K562 (cell line): ENCODE measurements at regions of chr6 and their contacts with region 1.

Region 1: GRCh38 chr6:112180095-112180820 is 74.1 kb downstream of the LAMA4 start:
- DNase-seq: peak; percentile 39 to 85 (median 45)
- ATAC-seq: peak; percentile 91
- H3K4me3 ChIP-seq: no peak overlapping the region
- H3K27ac ChIP-seq: no peak overlapping the region
- H3K4me1 ChIP-seq: no peaks in the 10 kb centered on the region
- H3K27me3 ChIP-seq: peaks cover under 1 to 6% of the 10 kb centered on the region in 2 experiments; a peak in 3 of 5 replicates
- CTCF ChIP-seq: peak; percentile 44 to 79 (median 51); a peak in 4 of 6 replicates
- EP300 ChIP-seq: no peak
- POLR2A ChIP-seq: no peak
- RAD21 ChIP-seq: peak; percentile 88 to 90

Region 2: GRCh38 chr6:112311950-112312547 is 131.8 kb after region 1 on chr6:
- CTCF ChIA-PET with region 1: interaction called, 23 read pairs
- POLR2A ChIA-PET with region 1: interaction called, 4 read pairs
- in situ Hi-C with region 1: no loop called
- intact Hi-C with region 1: loop called (anchors 1 kb)
- DNase-seq: peak; percentile 18 to 40 (median 35)
- ATAC-seq: no peak
- H3K4me3 ChIP-seq: no peak overlapping the region
- H3K27ac ChIP-seq: no peak overlapping the region
- H3K4me1 ChIP-seq: no peaks in the 10 kb centered on the region
- H3K27me3 ChIP-seq: peaks cover 0 to 2% of the 10 kb centered on the region in 2 experiments; a peak in 1 of 5 replicates
- CTCF ChIP-seq: peak; percentile 40 to 66 (median 52); a peak in 5 of 6 replicates
- EP300 ChIP-seq: no peak
- POLR2A ChIP-seq: no peak
- RAD21 ChIP-seq: peak; percentile 59 to 67

Region 3: GRCh38 chr6:112372226-112372806 is 192.1 kb after region 1 on chr6:
- CTCF ChIA-PET with region 1: no interaction called
- POLR2A ChIA-PET with region 1: no interaction called
- in situ Hi-C with region 1: no loop called
- intact Hi-C with region 1: loop called (anchors 5 kb)
- DNase-seq: peak in 1 of 4 experiments; percentile 5
- ATAC-seq: peak; percentile 65
- H3K4me3 ChIP-seq: no peak overlapping the region
- H3K27ac ChIP-seq: no peak overlapping the region
- H3K4me1 ChIP-seq: peaks cover 0 to under 1% of the 10 kb centered on the region in 2 experiments; a peak in 1 of 5 replicates
- H3K27me3 ChIP-seq: peaks cover 0 to 1% of the 10 kb centered on the region in 2 experiments; a peak in 2 of 5 replicates
- CTCF ChIP-seq: peak in 2 of 3 experiments; percentile 47 to 50; a peak in 4 of 6 replicates
- EP300 ChIP-seq: no peak
- POLR2A ChIP-seq: no peak
- RAD21 ChIP-seq: peak; percentile 35 to 55; a peak in 3 of 4 replicates

Region 4: DNA sequence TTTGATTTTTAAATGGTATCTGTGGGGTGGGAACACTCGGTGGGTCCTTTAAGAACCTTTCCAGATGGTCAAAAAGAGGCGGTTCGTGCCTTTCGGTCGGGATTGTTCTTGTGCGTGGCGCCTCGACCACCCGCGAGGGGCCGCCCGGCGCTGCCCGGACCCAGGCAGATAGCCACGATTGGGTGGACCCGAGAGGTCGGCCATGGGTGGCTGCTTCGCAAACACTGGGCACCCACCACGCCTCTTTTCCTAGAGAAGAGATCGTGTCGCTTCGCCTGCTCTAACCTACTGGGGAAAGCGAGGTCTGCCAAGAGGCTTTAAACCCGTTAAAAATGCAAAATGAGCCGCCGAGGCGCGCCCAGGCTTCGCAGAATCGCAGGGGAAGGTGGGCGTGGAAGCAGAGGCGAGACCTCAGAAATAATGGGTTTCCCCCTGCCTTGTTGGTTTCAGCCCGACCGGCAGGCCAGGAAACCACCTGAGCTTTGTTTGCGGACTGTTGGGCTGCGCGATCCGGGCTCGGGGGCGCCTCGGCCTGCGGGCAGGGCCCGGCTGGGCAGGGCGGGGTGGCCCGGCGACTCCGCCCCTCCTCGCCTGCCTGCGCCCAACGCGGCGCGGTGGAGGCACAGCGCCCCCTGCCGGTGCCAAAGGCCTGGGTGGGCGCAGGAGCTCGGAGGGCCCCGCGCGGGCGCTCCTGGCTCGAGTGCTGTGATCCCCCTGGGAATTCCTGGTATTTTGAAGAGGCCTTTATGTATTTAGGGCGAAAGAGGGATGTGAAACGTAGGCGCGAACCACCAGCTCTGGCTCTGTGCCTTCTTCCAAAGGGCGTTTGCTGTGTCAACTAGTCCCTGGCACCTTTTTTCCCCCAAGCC is 1678.5 kb after region 1 on chr6:
- CTCF ChIA-PET with region 1: no interaction called
- POLR2A ChIA-PET with region 1: no interaction called
- in situ Hi-C with region 1: no loop called
- intact Hi-C with region 1: loop called (anchors 5 kb)
- DNase-seq: peak; percentile 73 to 92 (median 90)
- ATAC-seq: peak; percentile 90
- H3K4me3 ChIP-seq: peak overlapping the region; percentile 42
- H3K27ac ChIP-seq: no peak overlapping the region
- H3K4me1 ChIP-seq: peaks cover 6 to 25% of the 10 kb centered on the region in 2 experiments
- H3K27me3 ChIP-seq: peaks cover 0 to 15% of the 10 kb centered on the region in 2 experiments; a peak in 2 of 5 replicates
- CTCF ChIP-seq: peak; percentile 70 to 89 (median 79)
- EP300 ChIP-seq: no peak
- POLR2A ChIP-seq: no peak
- RAD21 ChIP-seq: peak; percentile 89 to 90

Region 5: DNA sequence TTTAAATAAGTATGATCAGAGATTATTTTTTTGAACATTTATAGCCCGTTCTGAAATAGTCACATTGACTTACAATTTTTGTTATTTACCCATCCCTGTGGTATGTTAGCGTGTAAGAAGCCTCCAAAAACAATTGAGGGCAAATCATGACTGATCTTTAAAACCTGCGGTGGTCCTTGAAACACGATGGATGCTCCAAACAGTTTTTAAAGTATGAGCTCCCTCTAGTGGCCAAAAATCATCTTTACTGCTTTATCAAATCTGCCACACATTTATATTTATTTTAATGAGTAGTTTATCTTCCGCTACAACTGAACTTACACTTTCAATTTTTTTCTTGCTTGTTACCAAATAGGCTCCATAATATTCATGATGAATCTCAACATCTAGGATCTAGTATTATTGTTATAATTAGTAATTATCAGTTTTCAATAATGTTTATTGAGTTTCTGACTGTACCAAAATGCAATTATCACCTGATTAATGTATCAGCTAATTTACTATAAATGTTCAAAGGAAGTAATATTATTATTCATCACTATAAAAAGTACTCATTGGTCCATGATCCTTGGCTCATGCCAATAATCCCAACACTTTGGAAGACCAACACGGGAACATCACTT is 1729.1 kb after region 1 on chr6:
- CTCF ChIA-PET with region 1: interaction called, 8 read pairs
- POLR2A ChIA-PET with region 1: no interaction called
- in situ Hi-C with region 1: loop called (anchors 25 kb)
- intact Hi-C with region 1: loop called (anchors 10 kb)
- DNase-seq: peak; percentile 48 to 69 (median 50)
- ATAC-seq: peak; percentile 75
- H3K4me3 ChIP-seq: no peak overlapping the region
- H3K27ac ChIP-seq: no peak overlapping the region
- H3K4me1 ChIP-seq: no peaks in the 10 kb centered on the region
- H3K27me3 ChIP-seq: no peaks in the 10 kb centered on the region
- CTCF ChIP-seq: peak; percentile 45 to 76 (median 48); a peak in 5 of 6 replicates
- EP300 ChIP-seq: no peak
- POLR2A ChIP-seq: no peak
- RAD21 ChIP-seq: peak; percentile 76 to 80